Activated naive CD8-positive, alpha-beta T cell treated with anti-CD3 and anti-CD28 coated beads, Interleukin-2, amount 10 ng/mL, durations not matched to agents 7 days and 5 days (primary cell): ENCODE measurements at regions of chr17 and their contacts with region 1.

Region 1: GRCh38 chr17:67431249-67432048 is 54.4 kb downstream of the PITPNC1 start:
- DNase-seq: no peak
- ATAC-seq: peak; percentile 19
- H3K4me3 Mint-ChIP-seq: peak overlapping the region; percentile 23
- H3K27ac Mint-ChIP-seq: peak overlapping the region; percentile 37
- H3K4me1 Mint-ChIP-seq: peaks cover 54% of the 10 kb centered on the region
- H3K27me3 Mint-ChIP-seq: no peaks in the 10 kb centered on the region

Region 2: DNA sequence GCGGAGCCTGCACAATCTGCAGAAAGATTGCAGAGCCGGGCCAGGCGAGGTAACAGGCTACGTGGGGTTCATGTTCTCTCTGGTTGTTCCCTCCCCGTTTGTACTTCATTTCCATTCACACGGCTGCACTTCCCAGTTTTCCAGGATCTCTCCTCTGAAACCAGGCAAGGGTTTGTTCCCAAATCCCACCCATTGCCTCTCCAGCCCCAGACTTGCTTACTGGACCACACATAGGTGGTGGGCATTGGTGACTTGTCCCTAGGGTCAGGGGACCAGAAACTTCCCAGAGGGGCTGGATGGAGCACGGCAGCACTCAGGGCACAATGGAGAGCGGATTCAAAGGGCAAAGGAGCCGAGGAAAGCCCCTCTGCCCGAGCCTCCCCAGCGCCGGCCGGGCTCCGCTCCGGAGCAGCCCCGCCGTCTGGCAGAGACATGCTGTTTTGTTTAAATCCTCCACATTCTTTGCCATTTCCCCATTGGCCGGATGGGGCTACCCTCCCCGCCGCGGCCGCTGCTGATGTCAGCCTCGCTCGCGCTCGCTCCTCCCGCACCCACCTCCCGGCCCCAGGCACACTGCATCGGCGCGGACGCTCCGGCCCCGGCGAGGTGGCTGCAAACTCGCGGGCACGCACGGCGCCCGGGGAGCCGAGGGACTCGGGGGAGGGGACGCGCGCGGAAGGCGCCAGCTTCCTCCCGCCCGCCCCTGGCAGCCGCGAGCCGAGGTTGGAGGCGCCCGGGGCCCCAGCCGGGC is 54.5 kb before region 1 on chr17 and contains the start of gene PITPNC1:
- POLR2A ChIA-PET with region 1: interaction called, 24 read pairs
- DNase-seq: peak; percentile 90
- ATAC-seq: peak; percentile 78
- H3K4me3 Mint-ChIP-seq: peak within 1 kb of the TSS; percentile 93
- H3K27ac Mint-ChIP-seq: peak within 1 kb of the TSS; percentile 90
- H3K4me1 Mint-ChIP-seq: peaks cover 39% of the 10 kb centered on the region
- H3K27me3 Mint-ChIP-seq: no peaks in the 10 kb centered on the region
- total RNA-seq, gene PITPNC1: 100 to 104 TPM

Region 3: GRCh38 chr17:67390646-67391384 is 40.6 kb before region 1 on chr17:
- POLR2A ChIA-PET with region 1: interaction called, 39 read pairs
- DNase-seq: peak; percentile 68
- ATAC-seq: peak; percentile 92
- H3K4me3 Mint-ChIP-seq: peak overlapping the region; percentile 88
- H3K27ac Mint-ChIP-seq: peak overlapping the region; percentile 92
- H3K4me1 Mint-ChIP-seq: peaks cover 55% of the 10 kb centered on the region
- H3K27me3 Mint-ChIP-seq: no peaks in the 10 kb centered on the region

Region 4: DNA sequence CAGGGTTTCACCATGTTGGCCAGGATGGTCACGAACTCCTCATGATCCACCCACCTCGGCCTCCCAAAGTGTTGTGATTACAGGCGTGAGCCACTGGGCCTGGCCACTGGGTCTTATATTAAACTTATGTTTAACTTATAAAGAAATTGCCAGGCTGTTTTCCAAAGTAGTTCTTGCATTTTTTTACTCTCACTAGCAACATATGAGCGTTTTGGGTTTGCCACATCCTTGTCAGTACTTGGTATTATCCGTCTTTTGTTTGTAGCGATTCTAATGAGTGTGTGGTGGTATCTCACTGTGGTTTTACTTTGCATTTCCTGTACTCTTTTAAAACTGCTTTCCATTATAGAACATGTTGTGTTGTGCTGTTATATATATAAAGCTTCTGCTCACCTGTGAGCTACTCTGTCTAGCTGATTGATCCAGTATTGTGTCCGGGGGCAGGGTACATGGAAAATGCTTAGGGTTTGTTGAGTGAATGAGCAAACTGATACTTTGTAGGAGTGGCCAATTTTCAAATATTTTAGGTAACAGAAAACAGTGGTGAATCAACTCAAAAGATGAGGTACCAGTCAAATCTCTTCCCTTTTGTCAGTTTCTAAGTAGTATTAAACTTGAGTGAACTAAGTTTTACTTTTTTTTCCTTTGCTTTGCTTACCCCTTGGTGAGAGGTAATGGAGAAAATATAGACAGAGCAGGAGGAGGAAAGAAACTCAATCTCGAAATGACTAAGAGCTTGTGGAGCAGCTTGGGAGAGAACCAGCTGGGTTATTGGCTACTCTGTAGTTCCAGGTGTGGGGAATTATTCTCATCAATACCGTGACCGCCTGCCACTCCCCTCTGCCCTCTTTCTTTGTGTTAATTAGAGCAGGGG is 21.5 kb after region 1 on chr17:
- POLR2A ChIA-PET with region 1: interaction called, 27 read pairs
- DNase-seq: peak; percentile 54
- ATAC-seq: peak; percentile 85
- H3K4me3 Mint-ChIP-seq: peak overlapping the region; percentile 78
- H3K27ac Mint-ChIP-seq: peak overlapping the region; percentile 97
- H3K4me1 Mint-ChIP-seq: peaks cover 64% of the 10 kb centered on the region
- H3K27me3 Mint-ChIP-seq: no peaks in the 10 kb centered on the region

Region 5: GRCh38 chr17:67469208-67469895 is 37.9 kb after region 1 on chr17:
- POLR2A ChIA-PET with region 1: interaction called, 26 read pairs
- DNase-seq: peak; percentile 55
- ATAC-seq: peak; percentile 90
- H3K4me3 Mint-ChIP-seq: peak overlapping the region; percentile 68
- H3K27ac Mint-ChIP-seq: peak overlapping the region; percentile 88
- H3K4me1 Mint-ChIP-seq: peaks cover 59% of the 10 kb centered on the region
- H3K27me3 Mint-ChIP-seq: no peaks in the 10 kb centered on the region

Region 6: DNA sequence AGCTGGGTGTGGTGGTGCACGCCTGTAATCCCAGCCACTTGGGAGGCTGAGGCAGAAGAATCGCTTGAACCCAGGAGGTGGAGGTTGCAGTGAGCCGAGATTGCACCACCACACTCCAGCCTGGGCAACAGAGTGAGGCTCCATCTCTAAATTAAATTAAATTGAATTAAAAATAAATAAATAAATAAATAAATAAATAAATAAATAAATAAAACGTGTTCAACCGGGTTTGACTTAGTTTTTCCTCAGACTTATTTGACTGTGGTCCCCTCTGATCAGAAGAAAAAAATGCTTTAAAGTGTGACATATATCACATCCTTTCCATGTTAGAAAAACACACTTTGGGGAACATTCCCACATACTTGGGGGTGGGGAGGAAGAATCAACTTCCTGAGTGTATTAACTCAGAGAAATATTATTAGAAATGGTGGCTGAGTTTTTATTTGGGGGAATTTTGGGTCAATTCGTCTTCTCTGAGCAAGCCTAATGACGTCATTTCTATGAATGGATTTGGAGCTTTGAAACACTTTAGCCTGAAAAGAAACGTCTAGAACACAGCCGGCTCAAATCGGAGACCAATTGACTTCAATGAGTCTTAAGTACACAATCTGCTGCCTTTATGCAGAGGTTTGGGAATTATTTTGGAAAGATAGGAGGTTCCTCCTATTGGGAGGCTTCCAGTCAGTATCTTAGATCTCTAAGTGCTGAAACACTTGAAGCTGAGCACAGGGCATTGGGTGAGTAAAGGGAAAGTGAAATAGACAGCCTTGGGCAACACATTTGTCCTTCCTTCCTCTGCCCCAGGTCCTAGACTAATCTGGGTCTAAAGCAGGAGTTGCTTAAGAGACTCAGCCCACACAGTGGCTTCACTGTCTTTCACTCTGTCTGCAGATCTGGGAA is 78.2 kb after region 1 on chr17:
- POLR2A ChIA-PET with region 1: no interaction called
- DNase-seq: no peak
- ATAC-seq: no peak
- H3K4me3 Mint-ChIP-seq: no peak overlapping the region
- H3K27ac Mint-ChIP-seq: no peak overlapping the region
- H3K4me1 Mint-ChIP-seq: peaks cover 17% of the 10 kb centered on the region
- H3K27me3 Mint-ChIP-seq: no peaks in the 10 kb centered on the region